ENCODE measurements at regions of chr2 and their contacts with region 1.

Region 1: DNA sequence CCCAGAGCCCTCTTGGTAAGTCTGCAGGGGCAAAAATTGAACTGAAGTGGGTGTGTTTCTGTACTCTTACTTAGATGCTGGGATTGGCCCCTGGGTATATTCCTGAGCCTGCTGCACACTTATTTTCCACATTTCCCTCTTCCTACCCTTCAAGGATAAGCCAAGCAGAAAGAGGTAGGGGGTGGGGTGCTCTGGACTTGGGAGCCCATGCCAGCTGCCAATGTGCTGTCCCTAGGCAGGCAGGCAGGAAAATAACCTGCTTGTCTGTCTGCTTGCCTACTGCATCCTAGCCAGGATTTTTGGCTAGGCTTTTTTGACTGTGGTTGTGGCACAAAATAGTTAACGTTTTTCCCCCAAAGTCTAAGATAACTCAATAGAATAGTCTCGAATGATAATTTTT is 234.3 kb downstream of the ALK start:
- DNase-seq: no peak
- ATAC-seq: no peak
- H3K4me3 ChIP-seq: no peak overlapping the region
- H3K27ac ChIP-seq: no peak overlapping the region
- H3K4me1 ChIP-seq: no peaks in the 10 kb centered on the region
- H3K27me3 ChIP-seq: no peaks in the 10 kb centered on the region
- CTCF ChIP-seq: no peak

Region 2: GRCh38 chr2:29855924-29856639 is 169.0 kb after region 1 on chr2:
- intact Hi-C with region 1: no loop called
- DNase-seq: no peak
- ATAC-seq: no peak
- H3K4me3 ChIP-seq: no peak overlapping the region
- H3K27ac ChIP-seq: no peak overlapping the region
- H3K4me1 ChIP-seq: no peaks in the 10 kb centered on the region
- H3K27me3 ChIP-seq: peaks cover 0 to 36% (median 0%) of the 10 kb centered on the region in 3 donors
- CTCF ChIP-seq: no peak

Region 3: GRCh38 chr2:30421604-30422443 is 734.7 kb after region 1 on chr2:
- intact Hi-C with region 1: loop called in 1 of 2 experiments (anchors 5 kb)
- DNase-seq: no peak
- ATAC-seq: peak in 1 of 4 donors; percentile 38
- H3K4me3 ChIP-seq: no peak overlapping the region
- H3K27ac ChIP-seq: no peak overlapping the region
- H3K4me1 ChIP-seq: peaks cover 5% of the 10 kb centered on the region
- H3K27me3 ChIP-seq: no peaks in the 10 kb centered on the region
- CTCF ChIP-seq: no peak